Mammary epithelial cell (primary cell): ENCODE measurements at regions of chr16 and their contacts with region 1.

Region 1: DNA sequence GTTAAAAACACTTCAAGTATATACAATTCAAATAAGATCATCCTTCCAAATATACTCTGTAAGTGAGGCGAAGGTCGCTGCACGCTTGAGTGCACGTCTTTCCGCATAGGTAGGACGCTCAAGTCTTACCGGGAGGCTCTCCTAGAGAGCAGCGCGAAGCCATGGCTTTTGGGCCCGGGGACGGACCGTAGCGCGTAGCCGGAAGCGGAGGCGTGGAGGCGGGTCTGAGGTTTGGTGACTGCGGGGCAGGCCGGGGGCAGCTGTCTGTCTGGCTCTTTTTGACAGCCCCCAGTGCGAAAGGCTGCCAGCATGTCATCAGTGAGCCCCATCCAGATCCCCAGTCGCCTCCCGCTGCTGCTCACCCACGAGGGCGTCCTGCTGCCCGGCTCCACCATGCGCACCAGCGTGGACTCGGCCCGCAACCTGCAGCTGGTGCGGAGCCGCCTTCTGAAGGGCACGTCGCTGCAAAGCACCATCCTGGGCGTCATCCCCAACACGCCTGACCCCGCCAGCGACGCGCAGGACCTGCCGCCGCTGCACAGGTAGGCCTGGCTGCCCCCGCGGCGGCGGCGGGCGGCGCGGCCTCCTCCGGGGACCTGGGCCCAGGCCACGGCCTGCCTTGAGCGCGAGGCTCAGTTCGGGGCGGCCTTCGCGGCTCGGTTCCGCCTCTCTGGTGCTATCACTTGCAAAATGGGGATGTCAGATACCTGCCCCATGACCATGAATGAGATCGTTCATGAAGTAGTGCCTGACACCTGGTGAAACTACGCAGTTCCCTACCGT is at the start of gene LONP2:
- DNase-seq: peak; percentile 93
- H3K4me3 ChIP-seq: peak within 1 kb of the TSS; percentile 76 to 93 (median 84)
- H3K27ac ChIP-seq: peak within 1 kb of the TSS; percentile 78
- H3K4me1 ChIP-seq: peaks cover 25% of the 10 kb centered on the region
- H3K27me3 ChIP-seq: no peaks in the 10 kb centered on the region
- CTCF ChIP-seq: no peak
- total RNA-seq, gene LONP2: 62.8 to 72.8 TPM

Region 2: GRCh38 chr16:48176635-48177408 is 67.4 kb before region 1 on chr16:
- CTCF ChIA-PET with region 1: no interaction called
- dilution Hi-C with region 1: no loop called
- in situ Hi-C with region 1: no loop called
- intact Hi-C with region 1: no loop called
- DNase-seq: no peak
- H3K4me3 ChIP-seq: no peak overlapping the region
- H3K27ac ChIP-seq: no peak overlapping the region
- H3K4me1 ChIP-seq: peaks cover 1% of the 10 kb centered on the region
- H3K27me3 ChIP-seq: no peaks in the 10 kb centered on the region
- CTCF ChIP-seq: no peak

Region 3: DNA sequence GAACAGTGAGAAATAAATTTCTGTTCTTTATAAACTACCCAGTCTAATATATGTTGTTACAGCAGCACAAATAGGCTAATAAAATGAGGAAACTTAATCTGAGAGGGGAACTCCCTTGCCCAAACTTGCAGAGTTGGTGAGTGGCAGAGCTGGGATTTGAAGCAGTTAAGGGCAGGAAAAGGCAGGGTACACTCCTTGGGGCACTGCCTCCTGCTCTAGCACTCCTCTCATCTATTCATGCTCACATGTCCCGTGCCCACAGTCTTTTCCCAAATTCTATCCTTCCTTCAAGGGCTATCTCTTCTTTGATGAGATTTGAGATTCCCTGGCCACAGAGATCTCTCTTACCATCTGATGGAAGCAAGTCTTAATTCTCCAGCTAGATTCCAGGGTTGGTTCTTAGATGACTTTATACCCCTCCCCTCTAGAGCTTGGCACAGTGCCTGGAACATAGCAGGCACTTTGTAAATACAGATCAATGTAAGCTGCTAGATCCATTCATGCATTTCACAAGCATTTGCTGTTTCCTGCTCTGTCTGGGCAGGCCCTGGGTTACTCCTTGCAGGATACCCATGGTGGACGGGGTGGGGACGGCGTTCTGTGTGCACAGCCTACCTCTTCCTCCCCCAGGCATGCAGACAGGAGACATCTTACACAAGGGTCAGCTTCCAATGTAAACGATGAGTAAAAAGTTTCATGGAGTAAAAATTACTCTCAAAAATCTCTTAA is 49.3 kb before region 1 on chr16:
- CTCF ChIA-PET with region 1: no interaction called
- dilution Hi-C with region 1: no loop called
- in situ Hi-C with region 1: no loop called
- intact Hi-C with region 1: loop called (anchors 2 kb)
- DNase-seq: peak; percentile 90
- H3K4me3 ChIP-seq: no peak overlapping the region
- H3K27ac ChIP-seq: peak overlapping the region; percentile 31
- H3K4me1 ChIP-seq: peaks cover 17% of the 10 kb centered on the region
- H3K27me3 ChIP-seq: no peaks in the 10 kb centered on the region
- CTCF ChIP-seq: no peak